ENCODE measurements at regions of chr1 and their contacts with region 1.

Region 1: GRCh38 chr1:229625915-229626831 is at the starts of genes TAF5L and URB2:
- DNase-seq: peak; percentile 87
- H3K4me3 ChIP-seq: peak within 1 kb of the TSS; percentile 97
- H3K27ac ChIP-seq: peak within 1 kb of the TSS; percentile 94
- H3K4me1 ChIP-seq: peaks cover 59% of the 10 kb centered on the region
- H3K27me3 ChIP-seq: no peaks in the 10 kb centered on the region
- CTCF ChIP-seq: no peak
- total RNA-seq, gene TAF5L: 9.3 TPM
- total RNA-seq, gene URB2: 3.5 TPM

Region 2: DNA sequence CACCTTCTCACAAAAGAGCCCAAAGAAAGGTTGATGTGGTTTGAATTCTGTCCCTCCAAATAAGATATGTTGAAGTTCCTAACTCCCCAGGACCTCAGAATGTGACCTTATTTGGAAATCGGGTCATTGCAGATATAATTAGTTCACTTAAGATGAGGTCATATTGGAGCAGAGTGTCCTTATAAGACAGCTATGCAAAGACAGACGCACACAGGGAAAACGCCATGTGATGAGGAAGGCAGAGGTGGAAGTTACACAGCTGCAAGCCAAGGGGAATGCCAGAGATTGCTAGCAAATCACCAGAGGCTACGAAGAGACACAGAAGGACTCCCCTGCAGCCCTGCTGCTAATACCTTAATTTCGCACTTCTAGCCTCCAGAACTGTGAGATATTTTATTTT is 62.5 kb before region 1 on chr1:
- intact Hi-C with region 1: loop called (anchors 10 kb)
- DNase-seq: no peak
- H3K4me3 ChIP-seq: peak overlapping the region; percentile 50
- H3K27ac ChIP-seq: peak overlapping the region; percentile 64
- H3K4me1 ChIP-seq: peaks cover 26% of the 10 kb centered on the region
- H3K27me3 ChIP-seq: no peaks in the 10 kb centered on the region
- CTCF ChIP-seq: no peak

Measured in left ventricle myocardium inferior (tissue), 1 donor.